ENCODE measurements at regions of chr10 and their contacts with region 1.

Region 1: DNA sequence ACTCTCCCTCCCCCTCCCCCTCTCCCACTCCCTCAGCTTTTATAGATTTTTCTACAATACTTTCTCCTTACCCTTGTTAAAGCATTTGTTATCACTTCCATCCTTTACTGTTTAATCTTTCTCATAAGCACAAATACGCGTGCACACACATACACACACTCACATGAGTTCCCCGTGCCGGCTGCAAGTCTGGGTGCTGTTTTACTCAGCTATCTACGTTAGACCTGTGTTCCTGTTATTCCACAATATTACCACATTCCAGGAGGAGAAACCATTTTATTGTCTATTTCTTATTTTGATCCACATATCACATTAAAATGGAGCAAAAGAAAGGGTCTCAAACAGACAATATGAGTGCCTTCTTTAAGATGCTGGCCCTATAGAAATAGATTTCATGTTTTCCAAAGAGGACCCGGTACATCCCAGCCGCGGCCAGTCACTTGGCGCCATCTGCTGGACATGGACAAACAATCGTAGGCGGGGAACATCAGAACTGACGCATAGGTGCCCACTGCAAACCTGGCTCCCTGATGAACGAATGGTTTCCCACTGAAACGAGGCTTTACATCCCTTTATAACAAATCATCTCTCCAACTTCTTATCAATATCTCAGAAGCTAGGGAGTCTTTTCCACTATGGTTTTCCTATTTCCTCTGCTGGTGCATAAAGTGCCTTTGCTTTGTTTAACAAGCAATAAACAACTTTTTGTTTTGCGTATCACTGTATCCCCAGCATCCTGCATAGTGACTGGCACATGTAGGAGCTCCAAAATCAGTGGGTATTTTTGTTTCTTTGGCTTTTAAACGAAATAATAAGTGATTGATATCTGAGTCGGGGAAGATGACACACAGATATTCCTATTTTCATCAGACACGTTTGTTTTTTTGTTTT is 25.2 kb upstream of the OPTN start:
- DNase-seq: peak; percentile 79
- H3K4me3 Mint-ChIP-seq: no peak overlapping the region
- H3K27ac Mint-ChIP-seq: no peak overlapping the region
- H3K4me1 Mint-ChIP-seq: peaks cover 7% of the 10 kb centered on the region
- H3K27me3 Mint-ChIP-seq: no peaks in the 10 kb centered on the region
- CTCF ChIP-seq: peak; percentile 81

Region 2: DNA sequence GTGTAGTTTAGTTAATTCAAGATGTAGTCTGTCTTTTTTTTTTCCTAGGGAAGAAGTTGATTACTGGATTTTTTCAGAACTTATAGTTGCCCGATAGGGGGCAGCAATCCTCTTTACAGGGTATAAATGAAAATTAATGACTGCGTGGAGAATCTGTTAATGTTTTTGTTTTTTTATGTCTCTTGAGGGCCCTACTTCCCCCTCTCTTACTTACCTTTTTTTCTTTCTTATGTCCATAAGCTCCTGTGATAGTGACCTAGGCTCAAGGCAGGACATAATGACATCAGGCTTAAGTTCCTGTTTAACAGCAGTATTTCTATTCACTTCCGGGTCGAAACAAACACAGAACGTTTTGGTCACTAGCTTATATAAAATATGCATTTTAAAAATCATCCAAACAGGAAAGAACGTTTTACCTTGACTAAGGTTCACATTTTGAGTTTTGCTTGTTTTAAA is 860.0 kb before region 1 on chr10:
- CTCF ChIA-PET with region 1: interaction called, 11 read pairs
- POLR2A ChIA-PET with region 1: no interaction called
- intact Hi-C with region 1: no loop called
- DNase-seq: peak; percentile 65
- H3K4me3 Mint-ChIP-seq: no peak overlapping the region
- H3K27ac Mint-ChIP-seq: peak overlapping the region; percentile 59
- H3K4me1 Mint-ChIP-seq: no peaks in the 10 kb centered on the region
- H3K27me3 Mint-ChIP-seq: no peaks in the 10 kb centered on the region
- CTCF ChIP-seq: peak; percentile 66

Region 3: DNA sequence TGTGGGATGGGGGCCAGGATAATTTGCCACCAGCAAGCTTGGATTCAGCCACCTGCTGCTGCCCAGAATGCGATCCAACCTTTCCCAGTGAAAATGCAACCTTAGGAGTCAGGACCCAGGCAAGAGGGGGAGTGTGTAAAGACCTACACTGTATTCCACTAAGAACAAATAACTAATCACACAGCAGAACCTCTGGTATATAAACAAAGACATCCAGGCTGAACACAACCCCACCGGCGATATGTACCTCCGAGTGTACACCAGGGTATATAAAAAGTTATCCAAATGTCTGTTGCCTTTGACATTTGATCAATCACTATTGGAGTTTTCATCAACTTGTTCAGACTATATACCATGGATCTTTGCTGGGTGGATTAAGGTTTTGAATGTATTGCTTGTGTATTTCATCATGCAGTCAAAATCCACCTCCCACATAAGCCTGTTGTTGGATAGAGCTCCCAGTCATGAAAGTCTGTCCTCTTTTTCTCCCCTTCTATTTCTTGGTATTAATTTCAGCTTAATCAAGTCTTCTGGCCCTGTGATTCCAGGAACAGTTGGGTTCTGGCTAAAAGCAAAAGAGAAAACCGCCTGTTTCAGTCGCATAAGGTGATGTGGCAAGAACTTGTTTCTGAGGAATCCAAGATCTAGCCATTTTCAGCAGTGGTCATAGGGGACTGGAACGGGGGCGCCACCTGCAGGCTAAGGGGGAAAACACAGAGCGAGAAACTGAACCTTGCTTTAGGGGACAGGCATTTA is 364.0 kb before region 1 on chr10:
- CTCF ChIA-PET with region 1: interaction called, 33 read pairs
- POLR2A ChIA-PET with region 1: no interaction called
- intact Hi-C with region 1: loop called (anchors 2 kb)
- DNase-seq: peak; percentile 88
- H3K4me3 Mint-ChIP-seq: peak overlapping the region; percentile 13
- H3K27ac Mint-ChIP-seq: peak overlapping the region; percentile 96
- H3K4me1 Mint-ChIP-seq: peaks cover 37% of the 10 kb centered on the region
- H3K27me3 Mint-ChIP-seq: no peaks in the 10 kb centered on the region
- CTCF ChIP-seq: peak; percentile 89

Region 4: DNA sequence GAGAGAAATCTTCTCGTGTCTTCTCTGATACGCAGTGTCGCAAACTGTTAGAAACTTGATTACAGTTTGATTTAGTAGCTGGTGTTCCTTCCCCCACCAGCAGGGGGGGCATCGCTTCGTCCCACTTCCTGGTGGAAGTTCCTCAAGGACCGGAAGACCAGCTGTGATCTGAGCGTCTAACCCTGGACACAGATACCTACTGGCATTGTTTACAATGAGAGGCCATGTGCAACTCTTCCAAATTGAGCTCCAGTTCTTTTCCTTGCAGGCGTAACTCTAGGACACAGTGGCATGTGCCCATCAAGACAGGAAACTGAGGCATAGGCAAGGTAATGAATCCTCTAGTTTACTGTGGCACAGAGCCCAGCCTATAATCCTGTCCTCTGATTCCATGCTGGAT is 292.3 kb before region 1 on chr10:
- CTCF ChIA-PET with region 1: interaction called, 5 read pairs
- POLR2A ChIA-PET with region 1: no interaction called
- intact Hi-C with region 1: loop called (anchors 5 kb)
- DNase-seq: peak; percentile 56
- H3K4me3 Mint-ChIP-seq: no peak overlapping the region
- H3K27ac Mint-ChIP-seq: no peak overlapping the region
- H3K4me1 Mint-ChIP-seq: no peaks in the 10 kb centered on the region
- H3K27me3 Mint-ChIP-seq: no peaks in the 10 kb centered on the region
- CTCF ChIP-seq: peak; percentile 61

Region 5: GRCh38 chr10:13056456-13057077 is 18.2 kb before region 1 on chr10:
- CTCF ChIA-PET with region 1: interaction called, 13 read pairs
- POLR2A ChIA-PET with region 1: no interaction called
- intact Hi-C with region 1: no loop called
- DNase-seq: peak; percentile 41
- H3K4me3 Mint-ChIP-seq: no peak overlapping the region
- H3K27ac Mint-ChIP-seq: no peak overlapping the region
- H3K4me1 Mint-ChIP-seq: no peaks in the 10 kb centered on the region
- H3K27me3 Mint-ChIP-seq: peaks cover 4% of the 10 kb centered on the region
- CTCF ChIP-seq: peak; percentile 38

Region 6: GRCh38 chr10:13099666-13100348 is 25.0 kb after region 1 on chr10 and contains the start of gene OPTN:
- CTCF ChIA-PET with region 1: interaction called, 22 read pairs
- POLR2A ChIA-PET with region 1: interaction called, 4 read pairs
- intact Hi-C with region 1: no loop called
- DNase-seq: peak; percentile 81
- H3K4me3 Mint-ChIP-seq: peak within 1 kb of the TSS; percentile 83
- H3K27ac Mint-ChIP-seq: peak within 1 kb of the TSS; percentile 87
- H3K4me1 Mint-ChIP-seq: peaks cover 26% of the 10 kb centered on the region
- H3K27me3 Mint-ChIP-seq: no peaks in the 10 kb centered on the region
- CTCF ChIP-seq: peak; percentile 75
- total RNA-seq, gene OPTN: 79.6 and 109 TPM in 2 replicates

Region 7: DNA sequence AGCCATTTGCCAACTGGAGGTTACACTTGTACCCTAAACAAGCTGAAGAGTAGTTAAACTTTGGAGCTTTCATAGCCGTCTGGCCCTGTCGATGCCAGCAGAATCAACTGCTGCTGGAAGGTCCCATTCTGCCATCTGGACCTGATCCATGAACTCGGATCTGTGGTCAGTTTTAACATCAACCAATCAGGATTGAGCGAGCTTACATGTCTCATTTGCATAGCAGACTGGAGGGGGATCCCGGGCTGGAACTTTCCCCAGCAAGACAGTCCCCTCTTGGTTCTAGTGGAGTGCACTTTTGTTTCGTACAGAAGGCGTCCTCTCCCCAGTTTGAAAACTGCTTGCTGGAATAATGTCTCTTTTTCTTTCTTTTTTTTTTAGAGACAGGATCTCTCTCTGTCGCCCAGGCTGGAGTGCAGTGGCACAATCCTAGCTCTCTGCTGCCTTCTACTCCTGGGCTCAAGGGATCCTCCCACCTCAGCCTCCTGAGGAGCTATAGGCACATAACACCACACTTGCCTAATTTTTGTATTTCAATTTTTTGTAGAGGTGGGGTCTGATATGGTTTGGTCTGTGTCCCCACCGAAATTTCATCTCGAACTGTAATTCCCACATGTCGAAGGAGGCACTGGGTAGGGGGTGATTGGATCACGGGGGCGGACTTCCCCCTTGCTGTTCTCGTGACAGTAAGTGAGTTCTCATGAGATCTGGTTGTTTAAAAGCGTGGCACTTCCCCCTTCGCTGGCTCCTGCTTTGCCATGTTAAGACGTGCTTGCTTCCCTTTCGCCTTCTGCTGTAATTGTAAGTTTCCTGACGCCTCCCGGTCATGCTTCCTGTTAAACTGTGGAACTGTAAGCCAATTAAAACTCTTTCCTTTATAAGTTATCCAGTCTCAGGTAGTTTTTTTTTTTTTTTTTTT is 316.1 kb after region 1 on chr10:
- CTCF ChIA-PET with region 1: no interaction called
- POLR2A ChIA-PET with region 1: no interaction called
- intact Hi-C with region 1: no loop called
- DNase-seq: no peak
- H3K4me3 Mint-ChIP-seq: no peak overlapping the region
- H3K27ac Mint-ChIP-seq: no peak overlapping the region
- H3K4me1 Mint-ChIP-seq: peaks cover 8% of the 10 kb centered on the region
- H3K27me3 Mint-ChIP-seq: no peaks in the 10 kb centered on the region
- CTCF ChIP-seq: no peak